AG04450 (cell line): ENCODE measurements at regions of chr7 and their contacts with region 1.

Region 1: DNA sequence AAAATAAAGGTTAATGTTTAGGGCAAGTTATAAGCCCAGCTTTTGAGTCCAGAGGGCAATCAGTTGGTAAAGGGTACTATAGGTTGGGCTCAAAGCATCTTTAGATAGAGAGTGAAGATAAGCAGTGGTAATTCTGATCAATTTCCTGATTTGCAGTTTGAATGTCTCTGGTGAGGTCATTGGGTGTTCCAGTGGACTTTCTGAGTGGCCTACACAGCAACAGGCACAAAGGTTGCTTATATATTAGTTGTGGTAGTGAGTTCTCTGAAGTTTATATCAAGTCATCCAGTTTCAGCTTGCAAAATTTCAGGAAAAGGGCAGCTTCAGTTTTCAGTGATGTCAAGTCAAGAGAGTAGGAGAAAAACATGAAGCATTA is 29.1 kb downstream of the GIMAP5 start:
- DNase-seq: no peak
- H3K4me3 ChIP-seq: no peak overlapping the region
- H3K27ac ChIP-seq: no peak overlapping the region
- H3K27me3 ChIP-seq: no peaks in the 10 kb centered on the region
- CTCF ChIP-seq: no peak

Region 2: GRCh38 chr7:150778738-150779301 is 12.5 kb after region 1 on chr7:
- CTCF ChIA-PET with region 1: interaction called, 13 read pairs
- POLR2A ChIA-PET with region 1: no interaction called
- DNase-seq: peak; percentile 43
- H3K4me3 ChIP-seq: no peak overlapping the region
- H3K27ac ChIP-seq: no peak overlapping the region
- H3K27me3 ChIP-seq: no peaks in the 10 kb centered on the region
- CTCF ChIP-seq: peak; percentile 90